Heart right ventricle (tissue), 16 donors: ENCODE measurements at regions of chr5 and their contacts with region 1.

Region 1: GRCh38 chr5:168486136-168486879 is at the start of gene RARS1:
- DNase-seq: peak; percentile 93 to 94
- ATAC-seq: peak; percentile 99 to 100 (median 99)
- H3K4me3 ChIP-seq: peak within 1 kb of the TSS; percentile 68 to 100 (median 93)
- H3K27ac ChIP-seq: peak within 1 kb of the TSS in 9 of 10 donors; percentile 71 to 89 (median 80)
- H3K4me1 ChIP-seq: peaks cover 0 to 20% (median 9%) of the 10 kb centered on the region in 9 donors
- H3K27me3 ChIP-seq: peaks cover 0 to 8% (median 0%) of the 10 kb centered on the region in 7 donors
- CTCF ChIP-seq: peak in 8 of 9 donors; percentile 89 to 99 (median 98)
- total RNA-seq, gene RARS1: 43.7 to 52.5 (median 46.0) TPM

Region 2: GRCh38 chr5:168268949-168269943 is 217.1 kb before region 1 on chr5:
- intact Hi-C with region 1: loop called in 5 of 10 experiments (anchors 2 to 5 kb)
- DNase-seq: peak; percentile 82 to 84
- ATAC-seq: peak; percentile 78 to 89 (median 88)
- H3K4me3 ChIP-seq: peak overlapping the region in 9 of 10 donors; percentile 12 to 49 (median 37)
- H3K27ac ChIP-seq: no peak overlapping the region
- H3K4me1 ChIP-seq: peaks cover 0 to 18% (median 14%) of the 10 kb centered on the region in 9 donors
- H3K27me3 ChIP-seq: peaks cover 0 to 8% (median 0%) of the 10 kb centered on the region in 7 donors
- CTCF ChIP-seq: peak; percentile 65 to 97 (median 91)

Region 3: GRCh38 chr5:168513861-168514428 is 27.6 kb after region 1 on chr5:
- intact Hi-C with region 1: no loop called
- DNase-seq: no peak
- ATAC-seq: no peak
- H3K4me3 ChIP-seq: no peak overlapping the region
- H3K27ac ChIP-seq: no peak overlapping the region
- H3K4me1 ChIP-seq: no peaks in the 10 kb centered on the region
- H3K27me3 ChIP-seq: no peaks in the 10 kb centered on the region
- CTCF ChIP-seq: no peak

Region 4: DNA sequence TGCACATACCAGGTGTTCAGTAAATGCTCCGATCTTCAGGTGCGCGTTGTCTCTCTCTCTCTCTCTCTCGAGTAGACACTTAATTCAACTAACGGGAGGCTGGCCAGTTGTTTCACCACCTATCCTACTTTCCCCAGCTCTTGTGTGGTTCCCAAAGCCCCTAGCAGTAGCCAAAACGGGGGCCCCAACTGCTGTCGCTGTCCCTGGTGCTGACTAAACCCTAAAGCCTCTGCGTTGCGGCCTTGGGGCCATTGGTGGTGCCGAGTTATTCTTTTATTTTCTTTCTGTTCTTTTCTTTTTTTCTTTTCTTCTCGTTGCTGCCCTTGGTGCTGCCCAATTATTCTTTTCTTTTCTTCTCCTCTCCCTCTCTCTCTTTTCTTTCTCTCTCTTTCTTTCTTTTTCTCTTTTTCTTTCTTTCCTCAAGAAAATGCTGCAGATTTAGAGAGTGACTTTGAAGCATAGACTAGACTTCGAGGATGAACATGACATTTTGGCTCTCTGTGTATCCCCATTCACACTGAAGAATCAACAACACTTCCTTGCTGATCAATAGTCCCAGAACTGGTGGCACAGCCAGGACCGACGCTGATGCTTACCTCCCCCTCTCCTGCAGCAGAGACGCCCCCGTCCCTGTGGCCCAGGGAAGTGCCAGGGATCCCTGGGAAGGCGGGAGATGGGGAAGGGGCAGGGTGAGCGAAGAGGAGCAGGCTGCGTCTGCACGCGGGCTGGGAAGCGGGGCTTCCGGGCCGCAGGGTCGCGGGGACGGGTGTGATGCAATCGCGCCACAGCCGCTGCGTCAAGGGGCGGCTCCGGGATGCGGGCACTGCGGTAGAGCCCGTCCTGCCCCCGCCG is 42.4 kb after region 1 on chr5 and contains the start of gene FBLL1:
- intact Hi-C with region 1: no loop called
- DNase-seq: peak in 1 of 2 donors; percentile 23
- ATAC-seq: peak in 4 of 8 donors; percentile 14 to 51 (median 44)
- H3K4me3 ChIP-seq: peak within 1 kb of the TSS in 9 of 10 donors; percentile 21 to 51 (median 46)
- H3K27ac ChIP-seq: no peak within 1 kb of the TSS
- H3K4me1 ChIP-seq: peaks cover 0 to 10% (median 7%) of the 10 kb centered on the region in 9 donors
- H3K27me3 ChIP-seq: peaks cover 0 to 44% (median 31%) of the 10 kb centered on the region in 7 donors
- CTCF ChIP-seq: no peak
- total RNA-seq, gene FBLL1: 0.16 to 0.61 (median 0.27) TPM in 4 of 10 donors, not detected in the others

Region 5: GRCh38 chr5:168563959-168564358 is 77.7 kb after region 1 on chr5:
- intact Hi-C with region 1: no loop called
- DNase-seq: no peak
- ATAC-seq: no peak
- H3K4me3 ChIP-seq: no peak overlapping the region
- H3K27ac ChIP-seq: no peak overlapping the region
- H3K4me1 ChIP-seq: peaks cover 0 to 34% (median 3%) of the 10 kb centered on the region in 9 donors
- H3K27me3 ChIP-seq: no peaks in the 10 kb centered on the region
- CTCF ChIP-seq: no peak

Region 6: DNA sequence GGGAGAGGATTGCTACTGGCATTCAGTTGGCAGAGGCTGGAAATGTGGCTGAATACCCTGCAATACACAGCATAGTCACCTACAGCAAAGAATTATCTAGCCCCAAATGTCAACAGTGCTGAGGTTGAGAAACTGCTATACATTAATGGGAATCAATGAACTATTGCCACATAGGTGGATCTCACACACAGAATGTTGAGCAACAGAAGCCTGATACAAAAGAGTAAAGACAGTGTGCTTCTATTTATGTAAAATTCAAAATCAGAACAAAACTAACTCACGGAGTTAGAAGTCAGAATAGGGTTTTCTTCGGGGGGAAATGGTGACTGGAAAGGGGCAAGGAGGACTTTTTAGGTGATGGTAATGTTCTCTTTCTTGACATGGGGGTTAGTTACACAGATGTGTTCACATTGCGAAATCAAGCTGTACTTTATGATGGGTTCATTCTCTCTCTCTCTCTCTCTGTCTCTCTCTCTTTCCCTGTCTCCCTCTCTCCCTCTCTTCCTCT is 138.6 kb after region 1 on chr5:
- intact Hi-C with region 1: no loop called
- DNase-seq: no peak
- ATAC-seq: no peak
- H3K4me3 ChIP-seq: no peak overlapping the region
- H3K27ac ChIP-seq: no peak overlapping the region
- H3K4me1 ChIP-seq: no peaks in the 10 kb centered on the region
- H3K27me3 ChIP-seq: no peaks in the 10 kb centered on the region
- CTCF ChIP-seq: no peak